Mammary epithelial cell (primary cell): ENCODE measurements at regions of chr3 and their contacts with region 1.

Region 1: DNA sequence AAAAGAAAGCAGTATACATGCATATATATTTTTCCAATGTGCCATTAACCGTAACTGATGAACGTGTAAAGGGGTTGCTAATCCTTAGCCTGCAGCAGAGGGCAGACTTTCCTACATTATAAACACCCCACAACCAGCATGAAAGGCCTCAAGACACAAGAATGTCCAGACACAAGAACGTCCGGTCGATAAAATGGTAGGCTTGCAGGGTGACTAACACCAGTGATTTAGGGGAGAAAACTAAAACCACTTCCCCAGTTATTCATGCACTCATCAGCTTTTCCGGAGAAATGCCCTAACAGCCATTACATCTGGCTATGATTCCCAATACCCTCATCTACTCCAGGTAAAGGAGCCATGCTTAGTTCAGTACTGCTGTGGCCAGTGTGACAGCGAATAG is 57.4 kb downstream of the LRTM1 start:
- DNase-seq: peak; percentile 69
- H3K4me3 ChIP-seq: no peak overlapping the region
- H3K27ac ChIP-seq: no peak overlapping the region
- H3K4me1 ChIP-seq: no peaks in the 10 kb centered on the region
- H3K27me3 ChIP-seq: no peaks in the 10 kb centered on the region
- CTCF ChIP-seq: peak; percentile 52 to 66

Region 2: DNA sequence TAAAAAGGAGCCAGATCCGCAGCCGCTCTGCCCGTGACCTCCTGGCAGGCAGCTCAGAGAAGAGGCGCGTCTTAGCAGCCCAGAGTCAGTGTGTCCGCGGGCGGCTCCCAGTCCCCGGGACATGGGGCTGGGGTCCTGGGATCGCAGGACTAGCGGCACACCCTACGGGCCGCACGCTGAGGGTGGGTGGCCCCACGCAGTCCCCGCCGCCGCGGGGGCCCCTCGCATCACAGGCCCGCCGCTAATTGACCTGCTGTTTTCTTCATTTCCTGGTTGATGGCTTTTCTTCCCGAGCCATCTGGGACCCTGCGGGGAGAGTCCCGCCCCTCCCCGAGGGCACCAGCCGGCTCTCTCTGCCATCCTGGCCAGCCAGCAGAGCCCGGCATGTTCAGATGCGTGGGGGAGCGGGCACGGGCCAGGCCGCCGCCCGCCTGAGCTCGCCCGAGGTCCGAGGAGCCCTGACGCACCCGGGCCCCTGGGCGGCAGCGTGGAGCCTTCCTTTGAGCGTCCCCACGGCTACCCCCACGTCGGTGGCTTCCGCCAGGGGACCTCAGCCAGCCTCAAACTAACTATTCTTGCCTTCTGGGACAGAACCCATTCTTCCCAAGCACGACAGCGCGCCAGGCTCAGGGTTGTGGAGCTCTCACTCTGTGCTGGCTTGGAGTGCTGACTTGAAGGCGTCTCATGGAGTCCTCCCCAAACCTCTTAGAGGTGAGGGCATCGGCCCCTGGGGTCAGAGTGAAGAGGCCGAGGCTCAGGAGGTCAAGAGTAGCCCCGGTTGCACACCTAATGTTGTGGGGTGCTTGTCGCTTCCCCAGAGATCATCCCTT is 782.6 kb before region 1 on chr3:
- CTCF ChIA-PET with region 1: no interaction called
- dilution Hi-C with region 1: no loop called
- in situ Hi-C with region 1: no loop called
- intact Hi-C with region 1: no loop called
- DNase-seq: no peak
- H3K4me3 ChIP-seq: no peak overlapping the region
- H3K27ac ChIP-seq: no peak overlapping the region
- H3K4me1 ChIP-seq: peaks cover 2% of the 10 kb centered on the region
- H3K27me3 ChIP-seq: no peaks in the 10 kb centered on the region
- CTCF ChIP-seq: no peak

Region 3: GRCh38 chr3:55013145-55013925 is 142.9 kb after region 1 on chr3:
- CTCF ChIA-PET with region 1: no interaction called
- dilution Hi-C with region 1: no loop called
- in situ Hi-C with region 1: no loop called
- intact Hi-C with region 1: loop called (anchors 1 kb)
- DNase-seq: peak; percentile 3
- H3K4me3 ChIP-seq: no peak overlapping the region
- H3K27ac ChIP-seq: no peak overlapping the region
- H3K4me1 ChIP-seq: no peaks in the 10 kb centered on the region
- H3K27me3 ChIP-seq: no peaks in the 10 kb centered on the region
- CTCF ChIP-seq: no peak

Region 4: DNA sequence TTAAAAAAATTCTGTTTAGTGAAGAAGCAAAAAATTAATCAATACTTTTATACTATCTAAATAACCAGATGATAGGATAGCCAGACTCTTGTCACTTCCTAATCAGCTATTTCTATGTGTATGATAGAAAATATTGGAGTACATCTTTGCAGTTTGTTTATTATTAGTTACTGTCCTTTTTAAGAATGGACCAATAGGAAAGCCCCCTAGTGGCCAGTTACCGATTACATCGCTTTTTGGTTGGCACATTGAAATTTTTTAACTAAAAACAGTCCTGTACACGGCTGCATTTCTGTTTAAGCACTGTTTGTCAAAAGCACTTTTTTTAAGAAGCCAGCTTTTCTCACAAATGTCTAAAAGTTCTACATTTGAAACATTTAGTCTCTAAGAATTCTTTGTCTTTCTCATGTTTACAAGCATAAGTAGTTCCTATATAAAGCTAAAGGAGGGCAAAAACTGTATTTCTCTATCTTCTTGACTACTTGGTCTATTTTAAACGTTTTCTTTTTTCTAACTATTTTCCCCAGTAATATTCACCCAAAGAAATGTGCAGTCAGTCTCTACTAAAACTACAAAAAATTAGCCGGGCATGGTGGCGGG is 310.6 kb after region 1 on chr3:
- CTCF ChIA-PET with region 1: no interaction called
- dilution Hi-C with region 1: no loop called
- in situ Hi-C with region 1: loop called in 1 of 2 experiments (anchors 25 kb)
- intact Hi-C with region 1: loop called (anchors 1 kb)
- DNase-seq: no peak
- H3K4me3 ChIP-seq: no peak overlapping the region
- H3K27ac ChIP-seq: no peak overlapping the region
- H3K4me1 ChIP-seq: no peaks in the 10 kb centered on the region
- H3K27me3 ChIP-seq: no peaks in the 10 kb centered on the region
- CTCF ChIP-seq: peak; percentile 69 to 75